Natural killer cell (primary cell): ENCODE measurements at regions of chr5 and their contacts with region 1.

Region 1: DNA sequence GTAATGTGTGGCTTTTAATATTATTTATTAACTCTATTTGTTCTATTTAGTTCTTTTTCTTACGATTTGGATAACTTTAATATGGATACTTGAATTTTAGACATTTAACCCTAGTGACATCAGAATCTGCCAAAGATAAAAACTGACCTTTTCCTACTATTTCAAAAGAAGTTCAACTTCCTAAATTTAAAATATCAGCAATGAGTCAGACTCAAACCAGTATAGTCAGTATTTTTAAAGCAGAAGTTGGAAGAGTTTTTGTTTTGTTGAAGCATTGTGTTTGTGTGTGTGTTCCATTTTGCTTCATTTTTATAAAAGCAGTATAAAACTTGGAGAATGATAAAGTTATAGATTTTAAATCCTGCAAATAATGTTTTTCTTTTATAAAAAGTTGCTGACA is 251.8 kb upstream of the RASA1 start:
- DNase-seq: no peak
- ATAC-seq: no peak
- H3K4me3 ChIP-seq: no peak overlapping the region
- H3K4me3 Mint-ChIP-seq: no peak overlapping the region
- H3K27ac ChIP-seq: no peak overlapping the region
- H3K27ac Mint-ChIP-seq: no peak overlapping the region
- H3K4me1 ChIP-seq: peaks cover 13% of the 10 kb centered on the region
- H3K4me1 Mint-ChIP-seq: peaks cover 13 to 14% of the 10 kb centered on the region in 2 donors
- H3K27me3 ChIP-seq: no peaks in the 10 kb centered on the region
- H3K27me3 Mint-ChIP-seq: peaks cover 0 to 1% of the 10 kb centered on the region in 2 donors
- CTCF ChIP-seq: no peak

Region 2: GRCh38 chr5:85813146-85813545 is 1202.8 kb before region 1 on chr5:
- intact Hi-C with region 1: no loop called
- DNase-seq: no peak
- ATAC-seq: no peak
- H3K4me3 ChIP-seq: no peak overlapping the region
- H3K4me3 Mint-ChIP-seq: no peak overlapping the region
- H3K27ac ChIP-seq: no peak overlapping the region
- H3K27ac Mint-ChIP-seq: no peak overlapping the region
- H3K4me1 ChIP-seq: no peaks in the 10 kb centered on the region
- H3K4me1 Mint-ChIP-seq: no peaks in the 10 kb centered on the region
- H3K27me3 ChIP-seq: no peaks in the 10 kb centered on the region
- H3K27me3 Mint-ChIP-seq: no peaks in the 10 kb centered on the region
- CTCF ChIP-seq: no peak

Region 3: DNA sequence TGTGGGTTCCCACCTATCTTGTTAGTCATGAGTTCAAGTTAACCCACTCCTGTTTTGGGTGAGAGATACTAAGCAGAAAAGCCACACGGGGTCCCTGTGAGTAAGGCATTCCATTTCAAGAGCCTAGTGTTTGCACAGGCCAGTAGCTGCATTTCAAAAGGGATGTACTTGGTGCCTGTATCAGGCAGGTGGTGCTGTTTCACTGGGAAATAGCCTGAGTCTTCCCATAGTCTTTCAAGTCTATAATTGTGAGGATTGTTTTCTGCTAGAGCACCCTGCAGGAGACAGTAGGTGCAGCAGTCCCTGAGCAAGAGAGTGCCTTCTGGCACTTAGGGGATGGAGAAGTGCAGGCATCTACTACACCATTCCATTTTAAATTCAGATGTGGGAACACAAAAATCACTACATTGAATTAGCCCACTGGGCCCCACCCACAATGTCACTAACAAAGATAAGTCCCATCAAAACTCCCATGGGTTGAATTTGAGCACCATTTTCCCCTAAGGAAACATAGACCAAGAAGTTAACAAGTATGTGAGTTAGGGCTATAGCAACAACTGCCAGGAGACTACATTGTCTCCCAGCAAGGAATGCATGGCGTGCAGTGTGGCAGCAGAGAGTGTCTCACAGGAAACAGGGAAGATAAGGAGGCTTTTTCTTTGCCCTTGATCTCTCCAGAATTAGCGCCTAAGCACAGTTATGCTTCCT is 135.0 kb before region 1 on chr5:
- intact Hi-C with region 1: loop called (anchors 10 kb)
- DNase-seq: peak in 1 of 2 donors; percentile 63
- ATAC-seq: peak; percentile 72 to 79 (median 75)
- H3K4me3 ChIP-seq: no peak overlapping the region
- H3K4me3 Mint-ChIP-seq: no peak overlapping the region
- H3K27ac ChIP-seq: no peak overlapping the region
- H3K27ac Mint-ChIP-seq: no peak overlapping the region
- H3K4me1 ChIP-seq: no peaks in the 10 kb centered on the region
- H3K4me1 Mint-ChIP-seq: no peaks in the 10 kb centered on the region
- H3K27me3 ChIP-seq: no peaks in the 10 kb centered on the region
- H3K27me3 Mint-ChIP-seq: peaks cover 0 to 4% of the 10 kb centered on the region in 2 donors
- CTCF ChIP-seq: peak; percentile 27